Activated CD8-positive, alpha-beta T cell treated with anti-CD3 and anti-CD28 coated beads, Interleukin-2, amount 10 ng/mL, durations not matched to agents 7 days and 5 days (primary cell): ENCODE measurements at regions of chr12 and their contacts with region 1.

Region 1: DNA sequence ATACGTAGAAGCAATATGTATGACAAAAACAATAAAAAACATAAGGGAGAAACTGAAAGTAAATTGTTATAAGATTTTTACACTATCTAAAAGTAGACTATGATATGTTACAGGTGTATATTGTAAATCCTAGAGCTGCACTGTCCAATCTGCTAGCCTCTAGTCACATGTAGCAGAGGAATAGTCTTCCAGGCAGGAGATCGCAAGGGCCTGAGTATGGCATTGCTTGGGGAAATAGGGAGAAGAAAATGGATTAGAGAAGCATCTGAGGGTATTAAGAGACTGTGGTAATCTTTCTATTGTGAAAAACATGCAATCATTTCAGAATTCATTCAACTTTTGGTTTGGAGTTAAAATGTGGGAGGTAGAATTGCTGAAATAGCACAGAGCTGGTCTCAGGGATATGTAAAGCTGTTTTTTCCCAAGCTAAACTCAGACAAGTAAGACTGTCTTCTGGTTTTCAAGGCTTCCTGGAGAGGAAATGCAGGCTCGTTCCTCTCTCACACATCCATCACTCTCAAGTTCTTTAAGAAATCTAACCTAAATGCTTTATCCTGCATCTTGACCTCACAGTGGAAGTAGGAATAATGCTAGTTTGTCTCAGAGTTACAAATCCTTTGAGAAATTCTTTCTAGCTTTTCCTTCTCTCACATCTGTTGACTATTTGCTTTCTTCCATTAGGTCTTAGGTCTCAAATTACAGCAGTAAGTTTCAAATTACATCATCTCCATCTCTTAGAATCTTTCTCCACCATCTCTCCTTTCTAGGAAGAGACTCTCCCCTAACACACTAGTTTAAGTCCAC is 7.6 kb upstream of the CCDC184 start:
- DNase-seq: no peak
- ATAC-seq: no peak
- H3K4me3 Mint-ChIP-seq: peak overlapping the region; percentile 13
- H3K27ac Mint-ChIP-seq: peak overlapping the region; percentile 32
- H3K4me1 Mint-ChIP-seq: peaks cover 11% of the 10 kb centered on the region
- H3K27me3 Mint-ChIP-seq: peaks cover 31% of the 10 kb centered on the region

Region 2: DNA sequence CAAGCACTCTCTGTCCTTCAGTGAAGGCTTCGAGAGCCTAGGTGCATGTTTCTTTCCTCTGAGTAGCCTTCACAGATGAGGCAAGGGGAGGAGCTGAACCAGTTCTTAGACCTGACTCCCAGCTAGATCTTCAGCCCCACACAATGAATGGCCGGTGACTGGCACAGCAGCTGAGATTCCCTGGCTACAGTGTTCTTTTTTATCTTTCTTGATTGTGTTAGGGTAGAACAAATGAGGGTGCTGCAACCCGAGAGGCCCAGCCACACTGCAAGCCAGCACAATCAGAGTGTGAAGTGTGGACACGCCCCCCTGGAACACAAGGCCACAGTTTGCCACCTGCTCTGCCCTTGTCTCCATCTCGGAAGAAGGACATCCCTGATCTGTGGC is 152.4 kb before region 1 on chr12:
- CTCF ChIA-PET with region 1: no interaction called
- POLR2A ChIA-PET with region 1: no interaction called
- DNase-seq: no peak
- ATAC-seq: no peak
- H3K4me3 Mint-ChIP-seq: no peak overlapping the region
- H3K27ac Mint-ChIP-seq: no peak overlapping the region
- H3K4me1 Mint-ChIP-seq: peaks cover 19% of the 10 kb centered on the region
- H3K27me3 Mint-ChIP-seq: peaks cover 31% of the 10 kb centered on the region

Region 3: GRCh38 chr12:48189331-48190125 is 13.7 kb after region 1 on chr12:
- CTCF ChIA-PET with region 1: interaction called, 36 read pairs
- POLR2A ChIA-PET with region 1: no interaction called
- DNase-seq: peak; percentile 81
- ATAC-seq: peak; percentile 57
- H3K4me3 Mint-ChIP-seq: no peak overlapping the region
- H3K27ac Mint-ChIP-seq: no peak overlapping the region
- H3K4me1 Mint-ChIP-seq: peaks cover 1% of the 10 kb centered on the region
- H3K27me3 Mint-ChIP-seq: peaks cover 57% of the 10 kb centered on the region

Region 4: GRCh38 chr12:48221645-48222044 is 45.8 kb after region 1 on chr12:
- CTCF ChIA-PET with region 1: no interaction called
- POLR2A ChIA-PET with region 1: no interaction called
- DNase-seq: no peak
- ATAC-seq: no peak
- H3K4me3 Mint-ChIP-seq: no peak overlapping the region
- H3K27ac Mint-ChIP-seq: no peak overlapping the region
- H3K4me1 Mint-ChIP-seq: no peaks in the 10 kb centered on the region
- H3K27me3 Mint-ChIP-seq: peaks cover 18% of the 10 kb centered on the region

Region 5: DNA sequence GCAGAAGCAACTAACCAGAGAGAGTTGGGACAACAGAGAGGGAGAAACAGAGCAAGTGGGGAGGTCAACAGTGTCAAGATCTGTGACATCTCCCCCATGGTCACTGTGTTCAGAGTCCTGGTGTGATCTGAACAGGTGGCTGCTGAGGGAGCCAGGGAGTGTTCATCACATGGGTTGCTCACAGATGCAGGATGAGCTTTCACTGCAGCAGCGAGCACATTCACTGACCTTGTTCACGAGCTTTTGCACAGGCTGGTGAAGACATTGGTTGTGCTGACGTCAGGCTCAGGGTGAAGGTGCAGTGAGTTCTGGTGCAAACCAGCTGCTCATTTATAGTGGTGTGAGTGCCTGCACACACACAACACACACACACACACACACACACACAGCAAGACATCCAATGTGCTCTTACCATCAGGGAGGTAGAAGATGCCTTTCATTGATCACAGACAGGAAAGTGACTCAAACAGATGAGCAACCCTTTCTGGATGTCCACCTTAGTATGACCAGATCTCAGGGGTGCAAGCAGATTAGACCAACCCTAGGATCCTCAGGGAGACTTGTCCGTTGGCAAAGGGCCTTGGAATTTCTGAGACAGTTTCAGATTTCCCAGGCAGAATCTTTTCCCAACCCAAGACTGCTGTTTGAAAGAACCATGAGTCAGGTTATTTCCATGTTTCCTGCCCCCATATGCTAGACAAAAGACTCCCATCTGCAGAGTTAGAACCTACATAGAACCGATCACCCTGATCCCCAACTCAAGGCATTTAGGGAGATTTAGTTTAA is 71.6 kb after region 1 on chr12:
- CTCF ChIA-PET with region 1: no interaction called
- POLR2A ChIA-PET with region 1: no interaction called
- DNase-seq: no peak
- ATAC-seq: no peak
- H3K4me3 Mint-ChIP-seq: no peak overlapping the region
- H3K27ac Mint-ChIP-seq: no peak overlapping the region
- H3K4me1 Mint-ChIP-seq: no peaks in the 10 kb centered on the region
- H3K27me3 Mint-ChIP-seq: peaks cover 13% of the 10 kb centered on the region